HEK293 (cell line): ENCODE measurements at regions of chr17 and their contacts with region 1.

Region 1: DNA sequence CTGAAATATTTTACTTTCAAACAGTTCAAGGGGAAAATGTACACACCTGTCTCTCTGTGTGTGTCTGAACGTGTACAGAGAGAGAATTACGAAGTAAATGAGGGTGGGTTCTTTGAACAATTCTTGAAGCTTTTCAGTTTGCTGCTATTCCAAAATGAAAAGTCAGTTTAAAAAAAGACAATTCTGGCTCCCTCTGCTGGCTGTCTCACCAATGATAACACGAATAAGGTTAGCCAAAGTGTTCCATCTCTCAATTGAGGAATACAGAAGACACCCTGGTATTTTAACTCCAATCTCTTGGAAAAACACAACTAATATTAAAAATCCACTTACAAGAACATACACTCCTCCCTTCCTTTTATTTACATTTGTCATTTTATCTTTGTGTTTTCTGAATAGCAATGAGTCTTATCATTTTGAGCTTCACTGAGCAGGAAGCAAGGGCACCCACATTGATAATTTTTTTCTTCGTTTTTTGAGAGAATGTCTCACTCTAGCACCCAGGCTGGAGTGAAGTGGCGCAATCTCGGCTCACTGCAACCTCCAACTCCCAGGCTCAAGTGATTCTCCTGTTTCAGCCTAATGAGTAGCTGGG is 20.5 kb downstream of the EFTUD2 start:
- H3K4me3 ChIP-seq: no peak overlapping the region
- H3K27ac ChIP-seq: no peak overlapping the region
- H3K4me1 ChIP-seq: no peaks in the 10 kb centered on the region
- CTCF ChIP-seq: no peak

Region 2: GRCh38 chr17:44258811-44259351 is 619.8 kb before region 1 on chr17:
- CTCF ChIA-PET with region 1: no interaction called
- POLR2A ChIA-PET with region 1: no interaction called
- H3K4me3 ChIP-seq: no peak overlapping the region
- H3K27ac ChIP-seq: no peak overlapping the region
- H3K4me1 ChIP-seq: no peaks in the 10 kb centered on the region
- CTCF ChIP-seq: no peak

Region 3: GRCh38 chr17:44820631-44821212 is 58.0 kb before region 1 on chr17:
- CTCF ChIA-PET with region 1: interaction called, 10 read pairs
- POLR2A ChIA-PET with region 1: no interaction called
- H3K4me3 ChIP-seq: no peak overlapping the region
- H3K27ac ChIP-seq: peak overlapping the region; percentile 57; the same call in 1 of the 2 replicates
- H3K4me1 ChIP-seq: peaks cover 15% of the 10 kb centered on the region
- CTCF ChIP-seq: no peak

Region 4: GRCh38 chr17:44854192-44854591 is 24.5 kb before region 1 on chr17:
- CTCF ChIA-PET with region 1: interaction called, 7 read pairs
- POLR2A ChIA-PET with region 1: interaction called, 14 read pairs
- H3K4me3 ChIP-seq: no peak overlapping the region
- H3K27ac ChIP-seq: no peak overlapping the region
- H3K4me1 ChIP-seq: no peaks in the 10 kb centered on the region
- CTCF ChIP-seq: no peak

Region 5: DNA sequence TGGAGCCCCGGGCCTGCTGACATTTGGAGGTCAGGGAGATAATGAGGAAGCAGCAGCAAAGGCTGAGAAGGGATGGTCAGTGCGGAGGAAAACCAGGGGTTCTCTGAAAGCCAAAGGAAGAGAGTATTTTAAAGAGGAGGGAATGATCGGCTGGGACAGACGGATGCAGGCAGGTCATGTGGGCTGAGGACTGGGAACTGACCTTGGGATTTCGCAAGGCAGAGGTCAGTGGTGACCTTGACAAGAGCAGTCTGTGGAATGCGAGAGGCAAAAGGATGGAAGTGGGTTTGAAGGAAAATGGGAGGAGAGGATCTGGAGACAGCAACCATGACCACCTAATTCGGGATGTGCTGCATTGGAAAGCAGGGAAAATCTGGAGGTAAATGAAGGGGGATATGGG is 10.3 kb after region 1 on chr17:
- CTCF ChIA-PET with region 1: interaction called, 16 read pairs
- POLR2A ChIA-PET with region 1: interaction called, 3 read pairs
- H3K4me3 ChIP-seq: no peak overlapping the region
- H3K27ac ChIP-seq: no peak overlapping the region
- H3K4me1 ChIP-seq: no peaks in the 10 kb centered on the region
- CTCF ChIP-seq: no peak

Region 6: DNA sequence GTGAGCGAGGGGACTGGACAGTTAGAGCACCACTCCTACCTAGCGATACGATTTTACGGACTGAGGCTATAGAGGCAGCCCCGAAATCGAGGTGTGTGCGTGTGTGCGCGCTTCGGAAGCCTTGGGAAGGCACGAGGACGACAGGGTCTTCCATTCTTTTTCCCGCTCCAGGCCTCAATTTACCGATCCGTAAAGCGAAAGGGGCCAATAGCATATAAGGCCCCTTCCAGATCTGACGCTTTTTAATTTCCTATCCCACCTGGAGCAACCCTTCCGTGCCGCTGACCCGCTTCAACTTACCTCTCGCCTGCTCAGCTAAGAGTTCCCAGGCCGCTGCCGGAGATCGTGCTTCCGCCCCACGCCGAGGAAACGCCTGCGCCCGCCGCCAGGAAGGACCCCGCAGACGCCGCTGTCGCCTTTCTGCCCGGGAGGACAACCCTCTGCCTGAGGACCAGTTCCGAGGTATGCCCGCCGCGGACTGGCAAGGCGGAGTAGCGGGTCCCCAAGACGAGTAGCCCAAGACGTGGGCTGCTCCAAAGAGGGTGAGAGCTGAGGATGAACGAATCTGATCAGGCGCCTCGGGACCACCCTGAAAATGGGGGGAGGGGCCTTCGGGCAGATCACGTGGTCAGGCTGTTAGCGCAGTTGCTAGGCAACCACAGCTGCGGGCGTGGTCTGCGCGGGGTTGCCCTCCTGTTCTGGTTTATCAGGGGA is 20.5 kb after region 1 on chr17 and contains the start of gene EFTUD2:
- CTCF ChIA-PET with region 1: interaction called, 16 read pairs
- POLR2A ChIA-PET with region 1: interaction called, 8 read pairs
- H3K4me3 ChIP-seq: peak within 1 kb of the TSS; percentile 74
- H3K27ac ChIP-seq: peak within 1 kb of the TSS; percentile 93
- H3K4me1 ChIP-seq: peaks cover 24% of the 10 kb centered on the region
- CTCF ChIP-seq: no peak; the same call in 1 of the 2 replicates

Region 7: DNA sequence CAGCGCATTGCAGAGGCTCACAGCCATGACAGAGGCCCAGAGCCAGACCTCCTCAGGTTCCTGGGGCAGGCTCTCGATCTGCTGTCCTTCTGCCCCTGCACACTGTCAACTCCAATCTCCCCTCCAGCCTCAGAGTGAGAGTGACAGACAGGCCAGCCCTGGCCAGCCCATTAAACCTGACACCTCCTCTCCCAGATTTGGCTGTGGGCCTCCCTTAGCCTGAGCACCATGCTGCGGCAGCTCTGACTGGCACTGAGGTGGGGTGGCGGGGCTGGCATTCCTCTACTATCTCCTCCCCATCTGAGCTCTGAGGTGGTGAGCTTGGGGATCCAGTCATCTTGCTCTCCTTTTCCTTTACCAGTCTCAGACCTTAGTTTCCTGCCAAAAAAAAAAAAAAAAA is 104.8 kb after region 1 on chr17:
- CTCF ChIA-PET with region 1: no interaction called
- POLR2A ChIA-PET with region 1: no interaction called
- H3K4me3 ChIP-seq: no peak overlapping the region
- H3K27ac ChIP-seq: no peak overlapping the region
- H3K4me1 ChIP-seq: peaks cover 5% of the 10 kb centered on the region; the same call in 1 of the 2 replicates
- CTCF ChIP-seq: no peak

Region 8: DNA sequence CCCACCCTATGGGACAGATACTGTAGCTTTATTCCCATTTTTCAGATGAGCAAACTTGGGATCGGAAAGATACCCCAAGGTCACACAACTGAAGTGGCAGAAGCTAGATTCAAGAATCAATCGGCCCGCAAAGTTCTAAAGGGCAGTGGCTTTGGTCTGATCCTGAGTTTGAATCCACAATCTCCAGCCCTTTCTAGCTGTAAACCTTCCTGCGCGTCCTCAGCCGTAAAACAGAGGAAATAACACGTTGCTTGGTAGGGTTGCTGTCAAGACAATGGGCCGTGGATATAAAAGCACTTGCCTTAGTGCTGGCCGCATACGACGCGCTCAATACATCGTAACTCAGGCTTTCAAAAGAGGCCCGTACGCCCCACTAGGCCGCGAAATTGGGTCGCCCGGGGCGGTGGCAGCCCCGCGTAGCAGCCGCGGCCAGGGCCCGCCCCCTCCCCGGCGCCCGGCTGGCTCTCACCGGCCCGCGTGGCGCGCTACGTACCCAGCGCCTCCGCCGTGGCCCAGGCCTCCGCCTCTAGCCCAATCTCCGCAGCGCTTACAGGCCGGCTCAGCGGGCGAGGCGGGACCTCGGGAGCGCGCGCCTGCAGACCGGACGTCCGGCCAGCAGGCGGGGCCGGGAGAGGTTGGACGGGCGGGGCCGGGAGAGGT is 172.5 kb after region 1 on chr17 and contains the start of gene DCAKD:
- CTCF ChIA-PET with region 1: no interaction called
- POLR2A ChIA-PET with region 1: no interaction called
- H3K4me3 ChIP-seq: peak within 1 kb of the TSS; percentile 49
- H3K27ac ChIP-seq: peak within 1 kb of the TSS; percentile 99
- H3K4me1 ChIP-seq: peaks cover 10% of the 10 kb centered on the region; the same call in 1 of the 2 replicates
- CTCF ChIP-seq: no peak

Region 9: GRCh38 chr17:45073414-45074070 is 194.8 kb after region 1 on chr17:
- CTCF ChIA-PET with region 1: no interaction called
- POLR2A ChIA-PET with region 1: no interaction called
- H3K4me3 ChIP-seq: no peak overlapping the region
- H3K27ac ChIP-seq: no peak overlapping the region
- H3K4me1 ChIP-seq: no peaks in the 10 kb centered on the region; the same call in 1 of the 2 replicates
- CTCF ChIP-seq: no peak